H1 (cell line): ENCODE measurements at regions of chr3 and their contacts with region 1.

Region 1: GRCh38 chr3:851098-851795 is 241.6 kb upstream of the CNTN6 start:
- DNase-seq: peak; percentile 25 to 57
- H3K4me3 ChIP-seq: no peak overlapping the region; a peak in 1 of 8 replicates
- H3K27ac ChIP-seq: no peak overlapping the region
- H3K4me1 ChIP-seq: no peaks in the 10 kb centered on the region
- H3K27me3 ChIP-seq: no peaks in the 10 kb centered on the region
- CTCF ChIP-seq: peak in 2 of 3 experiments; percentile 29 to 30; a peak in 3 of 4 replicates
- EP300 ChIP-seq: no peak
- POLR2A ChIP-seq: no peak
- RAD21 ChIP-seq: peak; percentile 50 to 59

Region 2: GRCh38 chr3:861721-862120 is 10.5 kb after region 1 on chr3:
- CTCF ChIA-PET with region 1: interaction called, 29 read pairs
- POLR2A ChIA-PET with region 1: no interaction called
- DNase-seq: no peak
- H3K4me3 ChIP-seq: no peak overlapping the region
- H3K27ac ChIP-seq: no peak overlapping the region
- H3K4me1 ChIP-seq: no peaks in the 10 kb centered on the region
- H3K27me3 ChIP-seq: no peaks in the 10 kb centered on the region
- CTCF ChIP-seq: no peak
- EP300 ChIP-seq: no peak
- POLR2A ChIP-seq: no peak
- RAD21 ChIP-seq: no peak